Common myeloid progenitor, CD34-positive (primary cell): ENCODE measurements at regions of chr4 and their contacts with region 1.

Region 1: GRCh38 chr4:26081795-26082498 is 167.9 kb downstream of the SMIM20 start:
- DNase-seq: peak; percentile 39 to 51 (median 46)
- H3K4me3 ChIP-seq: no peak overlapping the region
- H3K27ac ChIP-seq: no peak overlapping the region
- H3K4me1 ChIP-seq: peaks cover 0 to 13% (median 4%) of the 10 kb centered on the region in 4 experiments
- H3K27me3 ChIP-seq: peaks cover 2 to 41% (median 14%) of the 10 kb centered on the region in 5 experiments

Region 2: DNA sequence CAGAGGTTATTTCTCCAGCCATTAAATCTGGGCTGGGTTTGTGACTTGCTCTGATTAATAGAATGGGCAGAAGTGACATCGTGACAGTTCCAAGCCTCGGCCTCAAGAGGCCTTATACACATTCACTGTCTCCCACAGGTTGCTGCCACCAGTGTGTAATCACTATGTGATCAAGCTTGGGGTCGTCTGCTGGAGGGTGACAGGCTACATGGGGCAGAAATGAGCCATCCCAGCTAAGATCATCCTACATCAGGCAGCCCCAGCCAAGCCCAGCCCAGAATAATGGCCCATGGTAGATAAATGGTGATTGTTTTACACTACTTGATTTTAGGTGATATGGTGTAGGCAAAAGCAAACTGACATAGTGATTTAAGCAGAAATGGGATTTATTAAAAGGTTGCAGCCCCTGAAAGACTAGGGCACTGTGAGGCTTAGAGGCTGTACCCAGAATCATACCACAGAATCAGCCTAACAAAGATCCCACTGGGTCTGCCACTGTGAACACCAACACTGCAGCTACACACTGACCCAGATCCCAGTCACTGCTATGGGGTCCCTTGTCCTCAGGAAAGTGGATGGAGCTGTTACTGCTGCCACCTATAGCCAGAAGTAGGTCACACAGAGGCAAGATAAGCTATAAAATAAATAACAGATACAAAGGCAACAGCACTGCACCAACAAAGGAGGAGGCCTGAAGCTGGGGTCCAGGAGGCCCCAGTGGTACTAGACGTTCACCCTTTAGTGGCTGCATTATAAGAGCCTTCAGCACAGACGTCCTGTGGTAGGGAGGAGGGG is 79.3 kb after region 1 on chr4:
- CTCF ChIA-PET with region 1: interaction called, 15 read pairs
- POLR2A ChIA-PET with region 1: no interaction called
- DNase-seq: peak in 2 of 3 donors; percentile 27 to 30
- H3K4me3 ChIP-seq: no peak overlapping the region
- H3K27ac ChIP-seq: no peak overlapping the region
- H3K4me1 ChIP-seq: peaks cover 0 to 8% (median 2%) of the 10 kb centered on the region in 4 experiments
- H3K27me3 ChIP-seq: no peaks in the 10 kb centered on the region

Region 3: GRCh38 chr4:26325191-26325590 is 243.2 kb after region 1 on chr4:
- CTCF ChIA-PET with region 1: interaction called, 12 read pairs
- POLR2A ChIA-PET with region 1: no interaction called
- DNase-seq: peak in 1 of 3 donors; percentile 38
- H3K4me3 ChIP-seq: no peak overlapping the region
- H3K27ac ChIP-seq: no peak overlapping the region
- H3K4me1 ChIP-seq: peaks cover 10 to 17% (median 14%) of the 10 kb centered on the region in 4 experiments
- H3K27me3 ChIP-seq: no peaks in the 10 kb centered on the region